Uterus (tissue), 4 donors: ENCODE measurements at regions of chr11 and their contacts with region 1.

Region 1: GRCh38 chr11:65606876-65607613 is 7.0 kb downstream of the MAP3K11 start:
- DNase-seq: peak; percentile 96 to 98
- H3K4me3 ChIP-seq: peak overlapping the region in 1 of 2 donors; percentile 31
- H3K27ac ChIP-seq: peak overlapping the region; percentile 83 to 94
- H3K4me1 ChIP-seq: peaks cover 0 to 3% of the 10 kb centered on the region in 2 donors
- H3K27me3 ChIP-seq: no peaks in the 10 kb centered on the region
- CTCF ChIP-seq: peak in 2 of 4 experiments; percentile 7 to 11
- POLR2A ChIP-seq: peak in 1 of 2 donors; percentile 37

Region 2: DNA sequence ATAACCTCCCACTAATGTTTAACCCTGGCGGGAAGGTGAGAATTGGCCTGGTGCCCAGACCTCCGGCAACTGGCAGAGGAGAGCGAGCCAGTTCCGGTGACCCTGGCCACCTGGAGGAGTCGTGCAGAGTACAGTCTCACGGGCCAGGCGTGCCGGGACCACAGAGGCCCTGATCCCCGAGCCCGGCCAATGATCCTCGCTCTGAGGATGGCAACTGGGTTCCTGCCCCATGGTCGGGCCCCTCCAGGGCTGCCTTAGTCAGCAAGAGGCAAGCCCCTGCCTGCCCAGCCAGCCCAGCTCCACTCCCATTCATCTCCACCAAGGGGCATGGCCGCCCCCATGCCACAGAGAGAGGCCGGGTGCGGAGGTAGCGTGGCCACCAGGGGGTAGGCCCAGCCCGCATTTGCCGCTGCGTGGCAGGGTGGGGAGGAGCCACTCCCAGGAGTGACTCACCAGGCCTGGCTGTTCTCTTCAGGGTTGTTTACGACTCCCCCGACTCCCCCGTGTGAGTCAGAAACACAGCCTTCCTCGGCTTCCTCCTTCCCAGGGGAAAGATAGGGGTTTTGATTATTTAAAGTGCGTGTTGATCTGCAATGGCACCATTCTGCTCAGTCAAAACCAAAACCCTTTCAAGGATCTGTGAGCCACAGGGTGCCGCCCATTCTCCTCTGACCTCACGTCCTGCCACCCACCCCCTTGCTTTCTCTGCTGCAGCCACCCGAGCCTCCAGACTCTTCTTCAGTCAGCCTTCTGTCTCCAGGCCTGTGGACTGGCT is 224.8 kb before region 1 on chr11 and contains the start of gene SLC25A45:
- intact Hi-C with region 1: loop called (anchors 10 kb)
- DNase-seq: peak; percentile 94 to 98
- H3K4me3 ChIP-seq: peak within 1 kb of the TSS; percentile 23 to 41
- H3K27ac ChIP-seq: peak within 1 kb of the TSS; percentile 95 to 97
- H3K4me1 ChIP-seq: peaks cover 13 to 17% of the 10 kb centered on the region in 2 donors
- H3K27me3 ChIP-seq: no peaks in the 10 kb centered on the region
- CTCF ChIP-seq: peak; percentile 91 to 99 (median 98)
- POLR2A ChIP-seq: peak; percentile 72 to 83
- total RNA-seq, gene SLC25A45: 0.29 to 5.9 (median 5.3) TPM in 3 of 4 donors, not detected in the other

Region 3: GRCh38 chr11:65432686-65433582 is 174.1 kb before region 1 on chr11:
- intact Hi-C with region 1: no loop called
- DNase-seq: peak in 1 of 2 donors; percentile 9
- H3K4me3 ChIP-seq: no peak overlapping the region
- H3K27ac ChIP-seq: peak overlapping the region in 1 of 2 donors; percentile 99
- H3K4me1 ChIP-seq: peaks cover 13 to 14% of the 10 kb centered on the region in 2 donors
- H3K27me3 ChIP-seq: no peaks in the 10 kb centered on the region
- CTCF ChIP-seq: peak in 1 of 4 experiments; percentile 35
- POLR2A ChIP-seq: no peak